H1 (cell line): ENCODE measurements at regions of chr7 and their contacts with region 1.

Region 1: GRCh38 chr7:129607457-129608120 is 3.9 kb upstream of the NRF1 start:
- DNase-seq: peak in 1 of 2 experiments; percentile 78
- H3K4me3 ChIP-seq: no peak overlapping the region
- H3K27ac ChIP-seq: no peak overlapping the region
- H3K4me1 ChIP-seq: no peaks in the 10 kb centered on the region; a peak in 2 of 7 replicates
- H3K27me3 ChIP-seq: no peaks in the 10 kb centered on the region
- CTCF ChIP-seq: peak; percentile 67 to 87 (median 71)
- EP300 ChIP-seq: no peak
- POLR2A ChIP-seq: no peak
- RAD21 ChIP-seq: peak; percentile 78

Region 2: GRCh38 chr7:129578829-129579228 is 28.8 kb before region 1 on chr7:
- CTCF ChIA-PET with region 1: interaction called, 13 read pairs
- POLR2A ChIA-PET with region 1: interaction called, 3 read pairs
- DNase-seq: no peak
- H3K4me3 ChIP-seq: no peak overlapping the region
- H3K27ac ChIP-seq: no peak overlapping the region
- H3K4me1 ChIP-seq: no peaks in the 10 kb centered on the region
- H3K27me3 ChIP-seq: no peaks in the 10 kb centered on the region; a peak in 1 of 7 replicates
- CTCF ChIP-seq: no peak
- EP300 ChIP-seq: no peak
- POLR2A ChIP-seq: no peak
- RAD21 ChIP-seq: no peak

Region 3: GRCh38 chr7:129617652-129618051 is 10.1 kb after region 1 on chr7:
- CTCF ChIA-PET with region 1: interaction called, 15 read pairs
- POLR2A ChIA-PET with region 1: interaction called, 7 read pairs
- DNase-seq: no peak
- H3K4me3 ChIP-seq: no peak overlapping the region
- H3K27ac ChIP-seq: no peak overlapping the region
- H3K4me1 ChIP-seq: peaks cover 0 to 5% (median 2%) of the 10 kb centered on the region in 4 experiments; a peak in 2 of 7 replicates
- H3K27me3 ChIP-seq: no peaks in the 10 kb centered on the region
- CTCF ChIP-seq: no peak
- EP300 ChIP-seq: no peak
- POLR2A ChIP-seq: no peak
- RAD21 ChIP-seq: no peak